CD8-positive, alpha-beta T cell (primary cell): ENCODE measurements at regions of chr2 and their contacts with region 1.

Region 1: DNA sequence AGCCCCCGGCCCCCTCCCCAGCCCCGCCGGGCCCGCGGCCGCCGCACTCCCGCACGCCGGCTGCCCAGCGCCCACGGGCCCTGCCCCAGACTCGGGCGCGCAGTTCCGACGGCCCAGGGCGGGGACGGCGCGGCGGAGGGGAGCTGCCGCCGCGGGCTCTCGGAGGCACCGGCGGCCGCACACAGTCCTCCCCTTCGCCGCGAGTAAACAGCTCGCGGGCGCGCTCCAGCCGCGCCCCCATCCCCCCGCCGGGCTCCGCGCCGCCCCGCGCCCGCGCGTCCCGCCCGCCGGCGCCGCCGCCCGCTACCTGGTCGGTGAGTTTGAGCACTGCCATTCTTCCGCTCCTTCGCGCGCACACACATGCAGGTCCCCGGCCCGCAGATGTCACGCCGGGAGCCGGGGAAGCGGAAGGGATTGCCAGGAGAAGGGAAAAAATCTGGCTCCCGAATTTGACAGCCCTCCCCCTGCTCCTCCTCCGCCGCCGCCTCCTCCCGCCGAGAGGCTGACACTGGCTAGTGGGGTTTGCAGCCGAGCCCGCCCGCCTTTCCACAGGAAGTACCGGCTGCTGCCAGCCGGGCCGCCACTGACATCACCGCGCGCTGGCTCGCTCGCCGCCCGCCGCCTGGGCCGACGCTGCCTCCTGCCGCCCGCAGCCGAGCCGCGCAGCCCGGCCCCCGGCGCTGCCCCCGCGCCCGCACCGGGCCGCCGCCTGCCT is at the start of gene ANKRD44:
- DNase-seq: peak; percentile 80 to 95 (median 88)
- ATAC-seq: peak; percentile 74
- H3K4me3 ChIP-seq: peak within 1 kb of the TSS; percentile 71 to 94
- H3K4me3 Mint-ChIP-seq: peak within 1 kb of the TSS; percentile 92
- H3K27ac ChIP-seq: peak within 1 kb of the TSS; percentile 86 to 88
- H3K27ac Mint-ChIP-seq: peak within 1 kb of the TSS; percentile 96
- H3K4me1 ChIP-seq: peaks cover 49% of the 10 kb centered on the region
- H3K4me1 Mint-ChIP-seq: peaks cover 75% of the 10 kb centered on the region
- H3K27me3 ChIP-seq: no peaks in the 10 kb centered on the region
- H3K27me3 Mint-ChIP-seq: no peaks in the 10 kb centered on the region
- CTCF ChIP-seq: no peak
- total RNA-seq, gene ANKRD44: 113 to 115 TPM

Region 2: GRCh38 chr2:197011799-197012641 is 298.4 kb before region 1 on chr2:
- CTCF ChIA-PET with region 1: no interaction called
- POLR2A ChIA-PET with region 1: interaction called, 5 read pairs
- intact Hi-C with region 1: loop called in 1 of 2 experiments (anchors 2 kb)
- DNase-seq: peak in 3 of 9 experiments; percentile 14 to 69 (median 57)
- ATAC-seq: peak; percentile 59
- H3K4me3 ChIP-seq: no peak overlapping the region
- H3K4me3 Mint-ChIP-seq: no peak overlapping the region
- H3K27ac ChIP-seq: no peak overlapping the region
- H3K27ac Mint-ChIP-seq: peak overlapping the region; percentile 46
- H3K4me1 ChIP-seq: no peaks in the 10 kb centered on the region
- H3K4me1 Mint-ChIP-seq: peaks cover 6% of the 10 kb centered on the region
- H3K27me3 ChIP-seq: no peaks in the 10 kb centered on the region
- H3K27me3 Mint-ChIP-seq: no peaks in the 10 kb centered on the region
- CTCF ChIP-seq: peak; percentile 78

Region 3: DNA sequence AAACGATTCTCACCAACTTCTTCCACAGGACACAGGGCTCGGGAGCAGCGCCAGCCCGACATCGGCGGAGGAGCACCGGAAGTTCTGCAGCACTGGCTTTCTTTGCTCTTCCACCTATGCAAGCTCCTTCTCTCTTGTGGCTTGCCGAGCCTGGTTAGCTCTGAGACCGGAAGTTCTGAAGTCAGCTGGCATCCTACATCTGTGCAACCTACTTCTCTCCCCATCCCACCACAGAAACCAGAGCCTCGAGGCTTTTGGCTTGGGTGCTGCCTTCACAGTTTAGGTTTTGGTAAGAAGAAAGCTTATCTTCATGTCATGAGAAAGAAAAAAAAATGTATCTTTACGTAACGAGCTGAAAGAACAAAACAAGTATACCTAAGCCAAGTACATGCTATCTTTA is 111.5 kb before region 1 on chr2:
- CTCF ChIA-PET with region 1: interaction called, 89 read pairs
- POLR2A ChIA-PET with region 1: interaction called, 288 read pairs
- intact Hi-C with region 1: loop called in 1 of 2 experiments (anchors 1 kb)
- DNase-seq: peak; percentile 76 to 98 (median 87)
- ATAC-seq: peak; percentile 80
- H3K4me3 ChIP-seq: peak overlapping the region in 1 of 2 experiments; percentile 41
- H3K4me3 Mint-ChIP-seq: peak overlapping the region; percentile 94
- H3K27ac ChIP-seq: peak overlapping the region; percentile 66 to 86
- H3K27ac Mint-ChIP-seq: peak overlapping the region; percentile 99
- H3K4me1 ChIP-seq: peaks cover 81% of the 10 kb centered on the region
- H3K4me1 Mint-ChIP-seq: peaks cover 90% of the 10 kb centered on the region
- H3K27me3 ChIP-seq: no peaks in the 10 kb centered on the region
- H3K27me3 Mint-ChIP-seq: no peaks in the 10 kb centered on the region
- CTCF ChIP-seq: no peak

Region 4: DNA sequence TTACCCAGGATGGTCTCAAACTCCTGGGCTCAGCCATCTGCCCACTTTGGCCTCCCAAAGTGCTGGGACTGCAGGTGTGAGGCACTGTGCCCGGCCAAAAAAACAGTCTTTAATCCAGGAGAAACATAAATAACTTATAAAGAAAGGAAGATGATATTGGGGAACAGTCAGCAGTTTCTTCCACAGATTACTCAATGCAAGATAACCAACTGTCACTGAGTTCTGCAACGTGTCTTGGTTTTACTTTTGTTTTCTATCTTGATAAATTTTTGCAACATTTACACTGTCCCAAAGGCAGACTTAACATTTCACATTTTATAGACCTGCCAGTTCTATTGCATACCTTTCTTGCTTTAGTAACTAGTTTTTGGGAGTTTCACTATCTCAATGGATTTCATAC is 71.0 kb before region 1 on chr2:
- CTCF ChIA-PET with region 1: interaction called, 6 read pairs
- POLR2A ChIA-PET with region 1: interaction called, 12 read pairs
- intact Hi-C with region 1: loop called (anchors 1 to 5 kb)
- DNase-seq: peak in 2 of 9 experiments; percentile 36 to 62
- ATAC-seq: peak; percentile 41
- H3K4me3 ChIP-seq: peak overlapping the region; percentile 38 to 41
- H3K4me3 Mint-ChIP-seq: peak overlapping the region; percentile 84
- H3K27ac ChIP-seq: peak overlapping the region; percentile 39 to 89
- H3K27ac Mint-ChIP-seq: peak overlapping the region; percentile 96
- H3K4me1 ChIP-seq: peaks cover 88% of the 10 kb centered on the region
- H3K4me1 Mint-ChIP-seq: peaks cover 87% of the 10 kb centered on the region
- H3K27me3 ChIP-seq: no peaks in the 10 kb centered on the region
- H3K27me3 Mint-ChIP-seq: no peaks in the 10 kb centered on the region
- CTCF ChIP-seq: no peak

Region 5: DNA sequence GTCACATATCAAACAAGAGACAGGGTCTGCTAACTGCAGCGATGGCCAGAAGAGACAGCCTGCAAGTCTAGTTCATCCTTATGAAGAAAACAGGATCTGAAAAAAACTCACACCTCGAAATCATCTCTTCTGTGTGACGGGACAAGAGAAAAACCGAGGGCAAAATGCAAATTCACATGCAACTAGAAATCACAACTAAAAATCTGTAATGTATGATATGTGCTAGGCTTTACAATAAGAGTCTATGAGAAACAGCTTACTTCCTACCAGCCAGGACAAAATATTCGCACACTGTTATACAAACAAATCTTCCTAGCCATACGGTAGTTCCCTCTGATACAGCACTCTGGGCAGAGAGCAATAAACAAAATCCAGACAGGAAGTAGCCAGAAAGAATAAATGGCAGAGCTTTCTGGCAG is 48.6 kb before region 1 on chr2:
- CTCF ChIA-PET with region 1: interaction called, 8 read pairs
- POLR2A ChIA-PET with region 1: interaction called, 34 read pairs
- intact Hi-C with region 1: loop called (anchors 1 to 5 kb)
- DNase-seq: peak in 2 of 9 experiments; percentile 39 to 55
- ATAC-seq: peak; percentile 39
- H3K4me3 ChIP-seq: peak overlapping the region in 1 of 2 experiments; percentile 20
- H3K4me3 Mint-ChIP-seq: peak overlapping the region; percentile 30
- H3K27ac ChIP-seq: peak overlapping the region; percentile 36 to 73
- H3K27ac Mint-ChIP-seq: peak overlapping the region; percentile 89
- H3K4me1 ChIP-seq: peaks cover 81% of the 10 kb centered on the region
- H3K4me1 Mint-ChIP-seq: peaks cover 81% of the 10 kb centered on the region
- H3K27me3 ChIP-seq: no peaks in the 10 kb centered on the region
- H3K27me3 Mint-ChIP-seq: no peaks in the 10 kb centered on the region
- CTCF ChIP-seq: no peak

Region 6: DNA sequence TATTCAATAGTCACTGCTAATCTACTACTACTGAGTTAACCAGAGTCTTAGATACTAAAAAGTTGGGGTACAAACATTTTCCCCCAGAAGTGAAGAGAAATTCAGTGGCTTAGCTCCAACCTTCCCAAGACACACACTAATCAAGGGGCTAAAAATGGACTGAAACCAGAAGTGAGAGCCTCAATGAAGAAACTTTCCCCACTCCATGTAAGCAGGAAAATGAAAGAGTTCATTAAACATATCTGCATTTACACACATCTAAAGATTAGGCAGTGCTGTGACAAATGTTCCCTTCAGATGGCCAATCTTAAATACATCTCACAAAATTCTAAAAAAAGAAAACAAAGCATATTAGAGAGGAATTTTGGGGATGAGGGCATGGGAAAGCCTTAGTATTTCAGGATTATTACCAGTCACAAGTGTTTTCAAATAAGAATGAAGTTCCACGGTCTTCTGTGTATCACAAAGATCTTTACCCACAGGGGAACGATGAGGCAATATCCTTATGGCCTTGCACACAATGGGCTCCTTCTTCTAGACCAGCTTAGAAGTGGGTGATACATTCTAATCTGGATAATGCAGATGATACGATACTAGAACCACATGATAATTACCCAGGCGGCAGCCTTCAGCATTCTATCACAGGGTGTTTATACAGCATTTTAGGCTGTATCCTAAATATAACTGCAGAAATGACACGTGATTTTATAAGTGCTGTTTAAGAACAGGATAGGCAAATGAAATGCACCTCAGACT is 17.0 kb before region 1 on chr2:
- CTCF ChIA-PET with region 1: interaction called, 7 read pairs
- POLR2A ChIA-PET with region 1: interaction called, 71 read pairs
- intact Hi-C with region 1: loop called (anchors 1 to 2 kb)
- DNase-seq: peak in 5 of 9 experiments; percentile 37 to 73 (median 51)
- ATAC-seq: peak; percentile 70
- H3K4me3 ChIP-seq: peak overlapping the region; percentile 11 to 18
- H3K4me3 Mint-ChIP-seq: peak overlapping the region; percentile 73
- H3K27ac ChIP-seq: peak overlapping the region; percentile 41 to 88
- H3K27ac Mint-ChIP-seq: peak overlapping the region; percentile 94
- H3K4me1 ChIP-seq: peaks cover 97% of the 10 kb centered on the region
- H3K4me1 Mint-ChIP-seq: peaks cover 86% of the 10 kb centered on the region
- H3K27me3 ChIP-seq: no peaks in the 10 kb centered on the region
- H3K27me3 Mint-ChIP-seq: no peaks in the 10 kb centered on the region
- CTCF ChIP-seq: no peak

Region 7: DNA sequence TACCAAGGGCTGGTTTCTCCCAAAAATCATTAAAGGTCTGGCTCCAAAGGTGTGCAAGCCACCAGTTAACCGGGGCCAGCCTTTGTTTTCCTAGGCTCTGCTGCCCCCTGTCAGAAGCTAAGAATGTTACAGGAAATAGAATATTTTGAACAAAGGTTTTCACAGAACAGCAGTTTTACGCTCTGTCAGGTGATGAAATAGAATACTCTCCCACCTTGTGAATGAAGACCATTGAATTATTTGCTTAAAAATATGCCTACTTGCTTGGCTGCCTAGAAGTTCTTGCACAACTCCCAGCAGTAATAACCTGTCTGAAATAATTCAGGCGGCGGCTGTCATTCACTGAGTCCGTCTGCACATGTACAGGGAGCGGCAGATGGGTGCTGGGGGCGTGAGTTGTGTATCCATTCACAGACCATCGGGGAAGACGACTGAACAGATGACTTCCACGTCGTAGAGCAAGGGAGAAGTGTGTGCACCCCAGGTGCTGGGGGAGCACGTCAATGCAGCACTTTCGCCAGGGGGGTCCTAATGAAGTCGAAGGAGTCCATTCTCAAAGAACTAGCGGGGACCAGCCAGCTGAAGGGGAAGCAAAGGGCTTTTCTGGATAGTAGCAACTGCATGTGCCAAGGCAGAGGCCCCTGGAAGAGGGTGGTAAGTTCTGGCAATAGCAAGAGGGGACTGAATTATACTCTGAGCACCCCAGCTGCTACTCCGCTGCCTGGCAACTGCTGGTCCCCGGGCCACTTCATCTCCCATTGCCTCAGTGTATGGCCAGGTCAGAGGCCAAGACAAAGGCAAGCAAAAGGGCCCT is 68.3 kb after region 1 on chr2:
- CTCF ChIA-PET with region 1: interaction called, 10 read pairs
- POLR2A ChIA-PET with region 1: no interaction called
- intact Hi-C with region 1: loop called (anchors 1 to 2 kb)
- DNase-seq: peak; percentile 24 to 78 (median 62)
- ATAC-seq: peak; percentile 57
- H3K4me3 ChIP-seq: no peak overlapping the region
- H3K4me3 Mint-ChIP-seq: no peak overlapping the region
- H3K27ac ChIP-seq: no peak overlapping the region
- H3K27ac Mint-ChIP-seq: no peak overlapping the region
- H3K4me1 ChIP-seq: peaks cover 7% of the 10 kb centered on the region
- H3K4me1 Mint-ChIP-seq: peaks cover 12% of the 10 kb centered on the region
- H3K27me3 ChIP-seq: no peaks in the 10 kb centered on the region
- H3K27me3 Mint-ChIP-seq: no peaks in the 10 kb centered on the region
- CTCF ChIP-seq: peak; percentile 93

Region 8: GRCh38 chr2:197799068-197799467 is 488.6 kb after region 1 on chr2:
- CTCF ChIA-PET with region 1: no interaction called
- POLR2A ChIA-PET with region 1: no interaction called
- intact Hi-C with region 1: no loop called
- DNase-seq: no peak
- ATAC-seq: no peak
- H3K4me3 ChIP-seq: no peak overlapping the region
- H3K4me3 Mint-ChIP-seq: no peak overlapping the region
- H3K27ac ChIP-seq: no peak overlapping the region
- H3K27ac Mint-ChIP-seq: no peak overlapping the region
- H3K4me1 ChIP-seq: peaks cover 12% of the 10 kb centered on the region
- H3K4me1 Mint-ChIP-seq: peaks cover 9% of the 10 kb centered on the region
- H3K27me3 ChIP-seq: no peaks in the 10 kb centered on the region
- H3K27me3 Mint-ChIP-seq: peaks cover 11% of the 10 kb centered on the region
- CTCF ChIP-seq: no peak